ENCODE measurements at regions of chr2 and their contacts with region 1.

Region 1: GRCh38 chr2:31255911-31256571 is 22.1 kb downstream of the EHD3 start:
- DNase-seq: peak; percentile 87
- H3K4me3 ChIP-seq: peak overlapping the region; percentile 61
- H3K27ac ChIP-seq: peak overlapping the region; percentile 95
- H3K4me1 ChIP-seq: peaks cover 86% of the 10 kb centered on the region
- CTCF ChIP-seq: no peak

Region 2: GRCh38 chr2:30146438-30147147 is 1109.4 kb before region 1 on chr2 and contains the start of gene YPEL5:
- CTCF ChIA-PET with region 1: no interaction called
- POLR2A ChIA-PET with region 1: interaction called, 5 read pairs
- intact Hi-C with region 1: loop called (anchors 5 kb)
- DNase-seq: peak; percentile 99
- H3K4me3 ChIP-seq: peak within 1 kb of the TSS; percentile 72
- H3K27ac ChIP-seq: peak within 1 kb of the TSS; percentile 92
- H3K4me1 ChIP-seq: peaks cover 46% of the 10 kb centered on the region
- CTCF ChIP-seq: no peak
- total RNA-seq, gene YPEL5: 37.9 and 38.9 TPM in 2 replicates

Region 3: GRCh38 chr2:30862054-30862651 is 393.9 kb before region 1 on chr2:
- CTCF ChIA-PET with region 1: interaction called, 3 read pairs
- POLR2A ChIA-PET with region 1: no interaction called
- intact Hi-C with region 1: loop called (anchors 5 kb)
- DNase-seq: peak; percentile 79
- H3K4me3 ChIP-seq: no peak overlapping the region
- H3K27ac ChIP-seq: no peak overlapping the region
- H3K4me1 ChIP-seq: peaks cover 23% of the 10 kb centered on the region
- CTCF ChIP-seq: peak; percentile 88

Region 4: DNA sequence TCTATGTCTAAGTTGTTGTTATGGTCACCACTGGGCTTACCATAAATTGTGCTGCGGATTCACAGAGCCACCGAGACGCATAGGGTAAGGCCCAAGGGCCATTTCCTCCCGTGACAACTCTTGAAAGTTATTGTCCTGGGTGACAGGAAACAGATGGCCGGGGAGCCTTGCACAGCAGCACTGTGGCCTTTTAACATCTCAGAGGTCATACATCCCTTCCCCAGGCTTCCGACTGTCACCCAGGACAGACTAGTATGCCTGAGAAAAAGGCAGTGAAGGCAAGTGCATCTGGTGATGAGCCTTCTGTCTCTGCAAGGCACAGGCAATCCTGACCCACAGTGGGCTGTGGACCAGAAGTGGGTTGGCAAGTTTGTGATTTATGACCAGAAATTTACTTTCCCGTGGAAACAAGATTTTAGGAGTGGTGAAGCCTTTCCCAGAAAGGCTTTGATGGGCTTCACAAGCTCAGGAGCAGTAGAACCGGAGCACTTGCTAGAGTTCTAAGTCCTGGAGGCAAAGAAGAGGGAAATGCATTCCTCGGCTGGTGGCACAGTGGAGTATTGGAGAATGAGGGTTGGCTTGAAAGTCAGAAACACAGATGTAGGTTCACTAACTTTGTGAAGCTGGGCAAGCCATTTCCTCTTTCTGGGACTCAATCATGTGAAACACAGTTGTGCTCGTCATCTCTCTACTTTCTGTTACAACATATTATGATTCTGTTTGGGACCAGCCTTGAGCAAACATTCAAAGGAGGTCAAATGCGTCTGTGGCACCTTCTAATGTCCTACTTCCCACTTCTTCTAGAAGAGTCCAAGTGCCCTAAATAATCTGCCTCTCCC is 36.7 kb before region 1 on chr2:
- CTCF ChIA-PET with region 1: no interaction called
- POLR2A ChIA-PET with region 1: interaction called, 6 read pairs
- intact Hi-C with region 1: loop called (anchors 1 kb)
- DNase-seq: peak; percentile 88
- H3K4me3 ChIP-seq: peak overlapping the region; percentile 46
- H3K27ac ChIP-seq: peak overlapping the region; percentile 79
- H3K4me1 ChIP-seq: peaks cover 71% of the 10 kb centered on the region
- CTCF ChIP-seq: no peak

Region 5: GRCh38 chr2:31333527-31334183 is 77.6 kb after region 1 on chr2:
- CTCF ChIA-PET with region 1: interaction called, 3 read pairs
- POLR2A ChIA-PET with region 1: no interaction called
- intact Hi-C with region 1: loop called (anchors 2 kb)
- DNase-seq: peak; percentile 85
- H3K4me3 ChIP-seq: no peak overlapping the region
- H3K27ac ChIP-seq: no peak overlapping the region
- H3K4me1 ChIP-seq: peaks cover 9% of the 10 kb centered on the region
- CTCF ChIP-seq: peak; percentile 100

Region 6: GRCh38 chr2:31957354-31958139 is 701.5 kb after region 1 on chr2:
- CTCF ChIA-PET with region 1: no interaction called
- POLR2A ChIA-PET with region 1: no interaction called
- intact Hi-C with region 1: no loop called
- DNase-seq: no peak
- H3K4me3 ChIP-seq: no peak overlapping the region
- H3K27ac ChIP-seq: no peak overlapping the region
- H3K4me1 ChIP-seq: no peaks in the 10 kb centered on the region
- CTCF ChIP-seq: no peak